CD4-positive, alpha-beta T cell (primary cell): ENCODE measurements at regions of chr1 and their contacts with region 1.

Region 1: GRCh38 chr1:26900001-26900814 is at the start of gene GPATCH3:
- DNase-seq: peak; percentile 78 to 95 (median 86)
- ATAC-seq: peak; percentile 94
- H3K4me3 ChIP-seq: peak within 1 kb of the TSS; percentile 98
- H3K4me3 Mint-ChIP-seq: peak within 1 kb of the TSS; percentile 98
- H3K27ac ChIP-seq: peak within 1 kb of the TSS; percentile 82 to 94
- H3K27ac Mint-ChIP-seq: peak within 1 kb of the TSS; percentile 93
- H3K4me1 ChIP-seq: peaks cover 29% of the 10 kb centered on the region
- H3K4me1 Mint-ChIP-seq: peaks cover 31% of the 10 kb centered on the region
- H3K27me3 ChIP-seq: no peaks in the 10 kb centered on the region
- H3K27me3 Mint-ChIP-seq: no peaks in the 10 kb centered on the region
- CTCF ChIP-seq: no peak
- total RNA-seq, gene GPATCH3: 30.2 to 32.4 TPM

Region 2: GRCh38 chr1:26833432-26834405 is 66.5 kb before region 1 on chr1:
- CTCF ChIA-PET with region 1: no interaction called
- POLR2A ChIA-PET with region 1: interaction called, 15 read pairs
- intact Hi-C with region 1: no loop called
- DNase-seq: peak; percentile 76 to 99 (median 86)
- ATAC-seq: peak; percentile 94
- H3K4me3 ChIP-seq: peak overlapping the region; percentile 32
- H3K4me3 Mint-ChIP-seq: peak overlapping the region; percentile 86
- H3K27ac ChIP-seq: peak overlapping the region; percentile 96 to 97
- H3K27ac Mint-ChIP-seq: peak overlapping the region; percentile 100
- H3K4me1 ChIP-seq: peaks cover 75% of the 10 kb centered on the region
- H3K4me1 Mint-ChIP-seq: peaks cover 75% of the 10 kb centered on the region
- H3K27me3 ChIP-seq: no peaks in the 10 kb centered on the region
- H3K27me3 Mint-ChIP-seq: no peaks in the 10 kb centered on the region
- CTCF ChIP-seq: peak; percentile 33

Region 3: DNA sequence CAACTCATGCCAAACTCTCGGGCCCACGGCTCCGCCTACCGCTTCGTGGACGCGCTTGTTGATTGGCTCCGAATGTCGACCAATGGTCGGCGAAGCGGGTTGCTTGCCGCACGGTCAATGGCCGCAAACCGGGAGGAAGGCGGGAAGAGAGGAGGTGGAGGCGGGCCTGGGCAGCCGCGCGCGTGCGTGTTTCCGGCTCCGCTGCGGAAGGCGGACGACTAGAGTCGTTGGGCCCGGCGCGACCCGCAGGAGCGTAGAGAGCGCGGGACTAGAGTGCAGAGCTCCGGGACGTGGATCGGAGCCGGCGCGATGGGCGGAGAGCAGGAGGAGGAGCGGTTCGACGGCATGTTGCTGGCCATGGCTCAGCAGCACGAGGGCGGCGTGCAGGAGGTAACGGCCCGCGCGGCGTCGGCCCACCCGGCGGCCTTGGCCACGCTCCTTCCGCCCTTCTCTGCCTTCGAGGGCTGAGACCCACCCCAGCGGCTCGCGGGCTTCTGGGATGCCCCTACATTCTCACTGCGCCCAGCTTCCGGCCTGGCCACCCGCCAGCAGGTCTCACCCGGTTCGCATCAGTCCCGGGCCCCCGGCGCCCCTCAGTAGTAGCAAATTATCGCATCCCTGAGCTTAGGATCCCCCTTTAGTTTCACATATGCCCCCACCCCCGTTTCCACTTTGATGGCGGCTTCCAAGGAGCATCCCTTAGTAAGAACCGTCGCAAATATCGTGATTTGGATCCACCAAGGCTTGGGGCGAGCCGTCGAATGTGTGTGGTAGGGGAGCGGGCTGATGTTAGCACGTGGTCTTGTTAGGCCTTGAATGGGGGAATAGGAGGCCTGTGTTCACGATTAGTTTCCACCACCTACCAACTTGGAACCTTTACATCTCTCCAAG is 21.6 kb after region 1 on chr1 and contains the start of gene NUDC:
- CTCF ChIA-PET with region 1: interaction called, 3 read pairs
- POLR2A ChIA-PET with region 1: interaction called, 33 read pairs
- intact Hi-C with region 1: loop called in 1 of 2 experiments (anchors 1 kb)
- DNase-seq: peak; percentile 91 to 98 (median 93)
- ATAC-seq: peak; percentile 94
- H3K4me3 ChIP-seq: peak within 1 kb of the TSS; percentile 74
- H3K4me3 Mint-ChIP-seq: peak within 1 kb of the TSS; percentile 91
- H3K27ac ChIP-seq: peak within 1 kb of the TSS; percentile 83 to 85
- H3K27ac Mint-ChIP-seq: peak within 1 kb of the TSS; percentile 90
- H3K4me1 ChIP-seq: peaks cover 28% of the 10 kb centered on the region
- H3K4me1 Mint-ChIP-seq: peaks cover 37% of the 10 kb centered on the region
- H3K27me3 ChIP-seq: no peaks in the 10 kb centered on the region
- H3K27me3 Mint-ChIP-seq: no peaks in the 10 kb centered on the region
- CTCF ChIP-seq: no peak
- total RNA-seq, gene NUDC: 43.0 to 44.6 TPM